T-cell (primary cell): ENCODE measurements at regions of chr6 and their contacts with region 1.

Region 1: GRCh38 chr6:2841264-2842138 is at the start of gene SERPINB1:
- DNase-seq: peak; percentile 47 to 81 (median 61)
- ATAC-seq: peak; percentile 77 to 84 (median 80)
- H3K4me3 ChIP-seq: peak within 1 kb of the TSS; percentile 56 to 64
- H3K4me3 Mint-ChIP-seq: peak within 1 kb of the TSS; percentile 83 to 91 (median 86)
- H3K27ac ChIP-seq: peak within 1 kb of the TSS; percentile 80
- H3K27ac Mint-ChIP-seq: peak within 1 kb of the TSS; percentile 94
- H3K4me1 ChIP-seq: peaks cover 16 to 43% of the 10 kb centered on the region in 2 experiments
- H3K4me1 Mint-ChIP-seq: peaks cover 52 to 65% (median 55%) of the 10 kb centered on the region in 3 donors
- H3K27me3 ChIP-seq: no peaks in the 10 kb centered on the region
- H3K27me3 Mint-ChIP-seq: no peaks in the 10 kb centered on the region
- total RNA-seq, gene SERPINB1: 40.3 to 60.9 (median 50.7) TPM

Region 2: GRCh38 chr6:2791124-2791974 is 50.2 kb before region 1 on chr6:
- CTCF ChIA-PET with region 1: interaction called, 3 to 16 read pairs
- POLR2A ChIA-PET with region 1: no interaction called
- DNase-seq: peak in 32 of 35 experiments; percentile 17 to 71 (median 40)
- ATAC-seq: peak; percentile 66 to 78 (median 72)
- H3K4me3 ChIP-seq: no peak overlapping the region
- H3K4me3 Mint-ChIP-seq: peak overlapping the region in 1 of 3 donors; percentile 10
- H3K27ac ChIP-seq: no peak overlapping the region
- H3K27ac Mint-ChIP-seq: peak overlapping the region; percentile 77 to 84
- H3K4me1 ChIP-seq: peaks cover 10 to 21% of the 10 kb centered on the region in 2 experiments
- H3K4me1 Mint-ChIP-seq: peaks cover 25 to 40% (median 26%) of the 10 kb centered on the region in 3 donors
- H3K27me3 ChIP-seq: no peaks in the 10 kb centered on the region
- H3K27me3 Mint-ChIP-seq: no peaks in the 10 kb centered on the region